ENCODE measurements at regions of chr12 and their contacts with region 1.

Region 1: GRCh38 chr12:98503592-98504367 is 11.6 kb upstream of the TMPO start:
- DNase-seq: peak; percentile 91 to 97
- ATAC-seq: peak; percentile 88 to 96 (median 89)
- H3K4me3 ChIP-seq: peak overlapping the region; percentile 58
- H3K4me3 Mint-ChIP-seq: peak overlapping the region; percentile 99
- H3K27ac ChIP-seq: peak overlapping the region; percentile 87
- H3K27ac Mint-ChIP-seq: peak overlapping the region; percentile 100
- H3K4me1 ChIP-seq: peaks cover 4% of the 10 kb centered on the region
- H3K4me1 Mint-ChIP-seq: peaks cover 18 to 23% of the 10 kb centered on the region in 2 donors
- H3K27me3 ChIP-seq: no peaks in the 10 kb centered on the region
- H3K27me3 Mint-ChIP-seq: peaks cover 8 to 11% of the 10 kb centered on the region in 2 donors
- CTCF ChIP-seq: no peak

Region 2: GRCh38 chr12:98208816-98209215 is 295.0 kb before region 1 on chr12:
- intact Hi-C with region 1: no loop called
- DNase-seq: no peak
- ATAC-seq: no peak
- H3K4me3 ChIP-seq: no peak overlapping the region
- H3K4me3 Mint-ChIP-seq: no peak overlapping the region
- H3K27ac ChIP-seq: no peak overlapping the region
- H3K27ac Mint-ChIP-seq: no peak overlapping the region
- H3K4me1 ChIP-seq: no peaks in the 10 kb centered on the region
- H3K4me1 Mint-ChIP-seq: no peaks in the 10 kb centered on the region
- H3K27me3 ChIP-seq: no peaks in the 10 kb centered on the region
- H3K27me3 Mint-ChIP-seq: peaks cover 0 to 2% of the 10 kb centered on the region in 2 donors
- CTCF ChIP-seq: no peak

Region 3: GRCh38 chr12:98490501-98491453 is 13.0 kb before region 1 on chr12:
- intact Hi-C with region 1: loop called (anchors 1 kb)
- DNase-seq: peak; percentile 81 to 92
- ATAC-seq: peak; percentile 90 to 99 (median 98)
- H3K4me3 ChIP-seq: no peak overlapping the region
- H3K4me3 Mint-ChIP-seq: no peak overlapping the region
- H3K27ac ChIP-seq: peak overlapping the region; percentile 42
- H3K27ac Mint-ChIP-seq: peak overlapping the region; percentile 45 to 75
- H3K4me1 ChIP-seq: peaks cover 5% of the 10 kb centered on the region
- H3K4me1 Mint-ChIP-seq: peaks cover 0 to 4% of the 10 kb centered on the region in 2 donors
- H3K27me3 ChIP-seq: no peaks in the 10 kb centered on the region
- H3K27me3 Mint-ChIP-seq: peaks cover 2 to 4% of the 10 kb centered on the region in 2 donors
- CTCF ChIP-seq: peak; percentile 78

Region 4: DNA sequence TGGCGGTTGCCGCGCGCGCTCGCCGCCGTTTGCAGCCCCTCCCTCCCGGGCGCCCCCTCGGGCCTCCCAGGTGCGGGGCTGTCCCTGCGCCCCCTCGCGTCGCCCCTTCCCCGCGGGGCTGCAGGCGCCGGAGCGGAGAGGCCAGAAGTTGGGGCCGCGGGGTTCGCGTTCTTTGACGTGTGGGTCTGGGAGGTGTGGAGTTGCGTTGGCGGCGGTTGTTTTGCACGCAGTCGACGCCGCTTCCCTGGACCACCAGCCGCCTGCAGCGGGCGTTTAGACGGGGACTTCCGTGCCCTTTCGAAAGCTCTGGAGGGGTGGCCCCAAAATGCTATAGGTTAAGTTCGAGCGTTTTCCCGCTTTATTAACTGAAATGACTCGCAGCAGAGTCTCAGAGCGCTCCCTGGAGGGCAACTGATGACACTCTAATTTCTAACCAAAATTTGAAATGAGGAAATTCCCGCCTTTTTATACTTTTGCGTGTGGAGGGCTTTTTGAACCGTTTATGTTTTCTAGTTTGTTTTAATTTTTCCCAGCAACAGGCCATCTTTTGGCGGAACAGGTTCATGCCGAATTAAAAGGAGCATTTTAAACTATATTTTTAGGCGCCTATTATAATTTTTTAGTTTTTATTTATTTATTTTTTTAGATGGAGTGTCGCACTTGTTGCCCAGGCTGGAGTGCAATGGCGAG is 12.5 kb after region 1 on chr12:
- intact Hi-C with region 1: loop called (anchors 1 kb)
- DNase-seq: peak; percentile 67 to 94
- ATAC-seq: peak; percentile 68 to 82 (median 69)
- H3K4me3 ChIP-seq: peak overlapping the region; percentile 49
- H3K4me3 Mint-ChIP-seq: peak overlapping the region; percentile 99
- H3K27ac ChIP-seq: peak overlapping the region; percentile 75
- H3K27ac Mint-ChIP-seq: peak overlapping the region; percentile 94 to 97
- H3K4me1 ChIP-seq: peaks cover 33% of the 10 kb centered on the region
- H3K4me1 Mint-ChIP-seq: peaks cover 31 to 36% of the 10 kb centered on the region in 2 donors
- H3K27me3 ChIP-seq: no peaks in the 10 kb centered on the region
- H3K27me3 Mint-ChIP-seq: no peaks in the 10 kb centered on the region
- CTCF ChIP-seq: peak; percentile 76

Region 5: GRCh38 chr12:98593351-98594049 is 89.7 kb after region 1 on chr12 and contains the start of gene SLC25A3:
- intact Hi-C with region 1: loop called (anchors 1 kb)
- DNase-seq: peak; percentile 91 to 99
- ATAC-seq: peak; percentile 94 to 100 (median 97)
- H3K4me3 ChIP-seq: peak within 1 kb of the TSS; percentile 63
- H3K4me3 Mint-ChIP-seq: peak within 1 kb of the TSS; percentile 98
- H3K27ac ChIP-seq: peak within 1 kb of the TSS; percentile 89
- H3K27ac Mint-ChIP-seq: peak within 1 kb of the TSS; percentile 92 to 99
- H3K4me1 ChIP-seq: peaks cover 7% of the 10 kb centered on the region
- H3K4me1 Mint-ChIP-seq: peaks cover 34 to 36% of the 10 kb centered on the region in 2 donors
- H3K27me3 ChIP-seq: no peaks in the 10 kb centered on the region
- H3K27me3 Mint-ChIP-seq: no peaks in the 10 kb centered on the region
- CTCF ChIP-seq: no peak
- total RNA-seq, gene SLC25A3: 393 to 490 (median 433) TPM

Region 6: DNA sequence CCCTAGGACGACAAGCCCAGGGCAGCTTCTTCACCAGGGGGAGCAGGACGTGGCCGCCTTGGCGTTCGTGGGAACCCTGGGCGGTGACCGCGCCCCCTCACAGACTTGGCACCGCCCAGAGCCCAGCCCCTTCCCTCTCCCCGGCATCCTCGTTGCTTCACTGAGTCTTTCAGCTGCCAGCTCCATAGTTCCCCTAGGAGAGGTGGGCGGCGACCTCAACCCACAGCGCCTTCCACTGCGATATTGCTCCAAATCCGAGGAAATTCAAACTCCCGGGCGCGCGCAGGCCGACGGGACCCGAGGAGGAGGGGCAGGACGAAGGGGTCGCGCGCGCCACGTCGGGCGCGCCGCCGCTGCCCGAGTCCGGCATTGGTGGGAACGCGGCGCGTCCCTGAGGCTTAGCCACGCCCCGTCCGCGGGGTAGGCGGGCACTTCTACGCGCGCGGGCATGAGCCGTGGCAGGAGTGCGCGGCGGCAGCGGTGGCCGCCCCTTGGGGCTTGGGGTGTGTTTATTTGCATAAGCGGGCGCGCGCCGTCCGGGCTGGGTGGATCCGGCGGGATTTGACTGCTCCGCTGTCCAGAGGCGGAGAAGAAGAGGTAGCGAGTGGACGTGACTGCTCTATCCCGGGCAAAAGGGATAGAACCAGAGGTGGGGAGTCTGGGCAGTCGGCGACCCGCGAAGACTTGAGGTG is 141.1 kb after region 1 on chr12 and contains the starts of genes APAF1 and IKBIP:
- intact Hi-C with region 1: loop called (anchors 5 kb)
- DNase-seq: peak; percentile 98
- ATAC-seq: peak; percentile 87 to 98 (median 89)
- H3K4me3 ChIP-seq: peak within 1 kb of the TSS; percentile 82
- H3K4me3 Mint-ChIP-seq: peak within 1 kb of the TSS; percentile 99
- H3K27ac ChIP-seq: peak within 1 kb of the TSS; percentile 77
- H3K27ac Mint-ChIP-seq: peak within 1 kb of the TSS; percentile 94 to 99
- H3K4me1 ChIP-seq: peaks cover 4% of the 10 kb centered on the region
- H3K4me1 Mint-ChIP-seq: peaks cover 25 to 27% of the 10 kb centered on the region in 2 donors
- H3K27me3 ChIP-seq: no peaks in the 10 kb centered on the region
- H3K27me3 Mint-ChIP-seq: no peaks in the 10 kb centered on the region
- CTCF ChIP-seq: no peak
- total RNA-seq, gene APAF1: 33.5 to 43.7 (median 34.9) TPM
- total RNA-seq, gene IKBIP: 3.9 to 6.3 (median 4.6) TPM

Region 7: GRCh38 chr12:100200463-100201181 is 1696.8 kb after region 1 on chr12 and contains the start of gene ACTR6:
- intact Hi-C with region 1: loop called (anchors 5 kb)
- DNase-seq: peak; percentile 97 to 99
- ATAC-seq: peak; percentile 86 to 94 (median 88)
- H3K4me3 ChIP-seq: peak within 1 kb of the TSS; percentile 81
- H3K4me3 Mint-ChIP-seq: peak within 1 kb of the TSS; percentile 99
- H3K27ac ChIP-seq: peak within 1 kb of the TSS; percentile 84
- H3K27ac Mint-ChIP-seq: peak within 1 kb of the TSS; percentile 98
- H3K4me1 ChIP-seq: peaks cover 28% of the 10 kb centered on the region
- H3K4me1 Mint-ChIP-seq: peaks cover 32 to 36% of the 10 kb centered on the region in 2 donors
- H3K27me3 ChIP-seq: no peaks in the 10 kb centered on the region
- H3K27me3 Mint-ChIP-seq: no peaks in the 10 kb centered on the region
- CTCF ChIP-seq: no peak
- total RNA-seq, gene ACTR6: 20.4 to 27.5 (median 20.8) TPM

Measured in natural killer cell (primary cell).